ENCODE measurements at regions of chr3 and their contacts with region 1.

Region 1: DNA sequence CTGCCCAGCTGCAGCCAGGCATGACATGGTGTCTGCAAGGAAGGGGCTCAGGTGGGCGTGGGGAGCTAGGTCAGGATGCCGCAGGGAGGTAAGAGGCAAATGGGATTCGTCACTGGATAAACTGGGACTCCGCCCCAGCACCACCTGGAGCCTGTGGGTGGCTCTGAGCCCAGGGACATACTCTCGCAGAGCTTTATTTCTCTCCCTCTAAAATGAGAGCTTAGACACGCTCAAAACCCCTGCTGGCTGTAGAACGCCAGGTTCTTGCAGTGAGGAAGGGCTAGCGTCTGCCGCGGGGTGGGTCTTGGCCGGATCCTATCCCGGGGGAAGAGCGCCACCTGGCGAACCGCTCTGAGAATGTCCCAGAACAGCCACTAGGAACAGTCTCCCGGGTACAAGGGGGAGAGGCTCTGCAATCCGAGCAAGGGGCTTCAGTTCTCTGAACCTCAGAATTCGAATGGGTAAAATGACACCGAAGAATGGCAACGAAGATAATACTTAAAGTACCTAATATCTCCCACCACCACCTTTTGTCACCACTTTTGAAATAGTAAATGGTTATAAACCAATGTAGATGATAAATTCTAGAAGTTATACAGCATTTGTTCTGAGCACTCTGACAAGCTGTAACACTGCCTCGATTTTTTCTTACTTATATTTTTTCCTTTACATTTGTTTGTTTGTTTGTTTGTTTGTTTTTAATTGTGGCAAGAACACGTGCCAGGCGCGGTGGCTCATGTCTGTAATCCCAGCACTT is 53.2 kb upstream of the SRGAP3 start:
- DNase-seq: peak; percentile 61 to 83
- H3K4me3 ChIP-seq: no peak overlapping the region
- H3K27ac ChIP-seq: no peak overlapping the region
- H3K4me1 ChIP-seq: 0 out of 2 replicates have a peak, but pooled peaks cover 4% of the 10 kb centered on the region
- H3K27me3 ChIP-seq: no peaks in the 10 kb centered on the region
- CTCF ChIP-seq: peak; percentile 94

Region 2: DNA sequence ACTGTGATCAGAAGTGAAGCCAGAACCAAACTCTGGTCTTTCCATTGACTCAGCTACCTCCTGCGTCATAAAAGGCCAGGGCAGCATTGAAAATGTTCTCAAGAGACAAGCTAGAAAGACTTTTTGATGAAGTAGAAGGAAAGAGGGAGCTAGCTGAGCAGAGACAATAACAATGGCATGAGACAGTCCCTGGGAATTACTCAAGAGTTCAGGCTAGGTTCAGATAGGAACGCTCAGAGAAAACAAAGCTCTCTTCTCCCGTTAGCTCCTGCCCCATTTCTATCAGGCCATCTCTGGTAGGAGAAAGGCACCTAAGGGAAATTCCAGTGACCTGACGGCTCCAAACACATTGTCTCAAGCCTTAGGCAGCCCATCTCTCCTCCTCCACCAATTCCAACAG is 526.2 kb before region 1 on chr3:
- CTCF ChIA-PET with region 1: no interaction called
- POLR2A ChIA-PET with region 1: no interaction called
- intact Hi-C with region 1: loop called (anchors 5 kb)
- DNase-seq: peak in 1 of 2 experiments; percentile 15
- H3K4me3 ChIP-seq: no peak overlapping the region
- H3K27ac ChIP-seq: no peak overlapping the region
- H3K4me1 ChIP-seq: no peaks in the 10 kb centered on the region
- H3K27me3 ChIP-seq: no peaks in the 10 kb centered on the region
- CTCF ChIP-seq: no peak

Region 3: GRCh38 chr3:8987645-8988383 is 314.8 kb before region 1 on chr3:
- CTCF ChIA-PET with region 1: interaction called, 12 read pairs
- POLR2A ChIA-PET with region 1: no interaction called
- intact Hi-C with region 1: loop called (anchors 1 kb)
- DNase-seq: peak in 1 of 2 experiments; percentile 55
- H3K4me3 ChIP-seq: no peak overlapping the region
- H3K27ac ChIP-seq: no peak overlapping the region
- H3K4me1 ChIP-seq: no peaks in the 10 kb centered on the region
- H3K27me3 ChIP-seq: no peaks in the 10 kb centered on the region
- CTCF ChIP-seq: peak; percentile 83

Region 4: DNA sequence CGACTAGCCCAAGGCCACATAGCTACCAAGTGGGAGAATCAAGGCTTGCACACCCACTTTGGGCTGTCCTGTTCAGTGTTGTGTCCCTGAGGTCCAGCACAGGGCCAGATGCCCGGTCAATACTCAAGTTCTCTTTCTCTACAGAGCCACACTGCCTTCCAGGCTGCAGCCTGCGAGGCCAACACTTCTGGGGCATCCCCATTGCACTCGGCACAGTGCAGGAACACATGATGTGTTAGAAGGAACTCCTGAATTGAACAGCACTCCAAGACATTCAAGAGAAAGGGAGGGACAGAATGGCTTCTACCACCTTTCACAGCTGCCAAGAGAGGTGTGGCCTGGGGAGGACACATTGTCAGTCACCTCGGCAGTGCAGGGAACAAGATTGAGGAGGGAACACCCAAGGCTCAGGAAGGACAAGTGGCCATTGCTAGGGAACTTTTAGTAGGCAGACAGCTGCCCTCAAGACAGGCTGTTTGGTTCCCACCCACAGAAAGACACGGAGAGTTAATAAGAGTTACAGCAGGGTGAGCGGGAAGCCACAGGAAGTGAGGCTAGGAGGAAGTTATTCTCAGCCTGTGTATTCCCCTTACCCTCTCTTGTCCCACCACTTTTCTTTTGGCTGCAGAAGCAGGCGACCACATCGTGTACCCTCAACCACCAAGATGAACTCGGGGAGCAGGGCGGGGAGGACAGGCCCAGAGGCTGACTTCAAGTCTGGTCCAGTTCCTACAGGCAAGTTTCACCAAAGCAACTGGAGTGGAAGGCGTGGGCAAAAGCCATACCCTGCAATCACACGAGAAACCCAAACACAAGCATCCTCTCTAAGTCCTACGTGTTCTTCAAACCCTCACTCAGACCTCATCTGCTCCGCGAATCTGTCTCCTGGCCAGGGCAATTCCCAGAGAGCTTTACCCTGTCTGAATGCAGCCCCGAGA is 122.5 kb before region 1 on chr3:
- CTCF ChIA-PET with region 1: no interaction called
- POLR2A ChIA-PET with region 1: no interaction called
- intact Hi-C with region 1: loop called (anchors 1 kb)
- DNase-seq: no peak
- H3K4me3 ChIP-seq: no peak overlapping the region
- H3K27ac ChIP-seq: no peak overlapping the region
- H3K4me1 ChIP-seq: peaks cover 3% of the 10 kb centered on the region
- H3K27me3 ChIP-seq: no peaks in the 10 kb centered on the region
- CTCF ChIP-seq: no peak

Region 5: GRCh38 chr3:9352917-9353752 is 50.5 kb after region 1 on chr3:
- CTCF ChIA-PET with region 1: interaction called, 5 read pairs
- POLR2A ChIA-PET with region 1: no interaction called
- intact Hi-C with region 1: loop called (anchors 5 kb)
- DNase-seq: peak; percentile 62 to 71
- H3K4me3 ChIP-seq: no peak overlapping the region
- H3K27ac ChIP-seq: peak overlapping the region; percentile 48
- H3K4me1 ChIP-seq: peaks cover 69% of the 10 kb centered on the region
- H3K27me3 ChIP-seq: no peaks in the 10 kb centered on the region
- CTCF ChIP-seq: peak; percentile 91

Region 6: DNA sequence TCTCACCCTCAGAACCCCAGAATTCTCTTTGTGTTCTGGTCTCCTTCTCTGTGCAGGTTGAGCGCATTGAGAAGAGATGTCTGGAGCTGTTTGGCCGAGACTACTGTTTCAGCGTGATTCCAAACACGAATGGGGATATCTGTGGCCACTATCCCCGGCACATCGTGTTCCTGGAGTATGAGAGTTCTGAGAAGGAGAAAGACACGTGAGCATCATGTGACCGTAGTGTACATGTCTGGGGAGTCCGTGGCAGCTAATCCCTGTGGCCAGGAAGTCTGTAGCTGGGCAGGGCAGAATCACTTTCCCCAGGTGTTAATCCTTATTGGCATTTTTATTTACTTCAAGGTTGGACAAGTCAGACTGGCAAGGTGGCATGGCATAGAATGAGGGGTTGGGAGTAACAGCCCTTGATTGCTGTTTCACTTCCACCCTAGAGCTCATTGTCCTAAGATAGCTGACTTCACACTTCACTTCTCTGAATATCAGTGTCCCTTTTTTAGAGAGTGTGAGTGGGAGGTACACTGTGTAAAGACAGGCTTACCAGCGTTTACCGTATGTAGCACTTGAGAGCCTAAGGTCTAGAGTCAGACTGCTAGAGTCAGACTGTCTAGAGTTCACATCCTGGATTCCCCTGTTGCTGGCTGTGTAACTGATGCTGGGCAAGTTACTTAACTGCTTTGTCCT is 351.1 kb after region 1 on chr3:
- CTCF ChIA-PET with region 1: no interaction called
- POLR2A ChIA-PET with region 1: no interaction called
- intact Hi-C with region 1: no loop called
- DNase-seq: no peak
- H3K4me3 ChIP-seq: no peak overlapping the region
- H3K27ac ChIP-seq: no peak overlapping the region
- H3K4me1 ChIP-seq: peaks cover 6% of the 10 kb centered on the region
- H3K27me3 ChIP-seq: no peaks in the 10 kb centered on the region
- CTCF ChIP-seq: no peak